AG04449 (cell line): ENCODE measurements at regions of chr6 and their contacts with region 1.

Region 1: DNA sequence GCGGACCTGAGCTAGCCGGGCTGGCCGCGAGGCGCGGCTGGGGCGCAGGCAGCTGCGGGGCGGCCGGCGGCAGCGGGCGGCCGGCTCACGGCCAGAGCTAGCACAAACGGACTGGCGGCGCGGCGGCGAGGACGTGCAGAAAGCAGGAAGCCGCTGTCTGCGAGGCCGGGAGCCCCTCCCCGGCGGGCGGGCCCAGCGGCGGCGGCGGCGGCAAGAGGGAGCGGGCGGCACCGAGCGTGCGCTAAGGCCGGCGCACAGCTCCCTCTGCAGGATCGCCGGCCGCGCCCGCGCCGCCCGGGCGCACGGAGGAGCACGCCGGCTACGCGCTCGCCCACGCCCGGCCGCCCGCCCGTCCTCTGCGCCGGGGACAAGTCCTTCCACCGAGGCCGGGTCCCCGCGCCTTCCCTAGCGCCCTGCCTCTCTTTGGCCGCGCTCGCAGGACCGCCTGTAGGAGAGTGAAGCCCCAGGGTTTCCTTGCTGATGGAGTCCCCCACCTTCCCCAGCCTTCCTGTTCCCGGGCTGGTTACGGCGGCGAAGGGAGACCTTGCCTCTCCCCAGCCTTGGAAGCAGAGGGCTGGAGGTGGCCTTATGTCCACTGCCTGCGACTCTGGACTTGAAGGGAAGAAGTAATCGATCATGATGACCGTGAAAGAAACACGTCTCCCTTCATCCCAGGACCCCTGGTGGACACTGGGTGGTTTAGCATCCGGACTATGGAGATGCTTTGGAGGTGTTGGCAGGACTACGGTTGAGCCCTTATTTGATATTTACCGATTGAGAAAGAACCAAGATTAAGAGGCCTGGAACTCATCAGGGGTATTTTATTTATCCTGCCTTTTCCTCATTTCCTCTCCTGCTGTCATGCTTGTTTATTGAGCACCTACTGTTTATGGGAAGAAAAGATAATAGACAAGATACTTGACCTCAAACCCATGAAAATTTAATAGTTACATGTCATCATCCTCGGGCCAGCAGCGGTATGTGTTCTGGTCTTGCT is at the start of gene PREP:
- DNase-seq: no peak
- H3K4me3 ChIP-seq: peak within 1 kb of the TSS; percentile 95
- CTCF ChIP-seq: peak; percentile 76

Region 2: GRCh38 chr6:105384008-105384407 is 19.2 kb before region 1 on chr6:
- CTCF ChIA-PET with region 1: interaction called, 18 read pairs
- POLR2A ChIA-PET with region 1: interaction called, 4 read pairs
- DNase-seq: no peak
- H3K4me3 ChIP-seq: no peak overlapping the region
- CTCF ChIP-seq: no peak

Region 3: DNA sequence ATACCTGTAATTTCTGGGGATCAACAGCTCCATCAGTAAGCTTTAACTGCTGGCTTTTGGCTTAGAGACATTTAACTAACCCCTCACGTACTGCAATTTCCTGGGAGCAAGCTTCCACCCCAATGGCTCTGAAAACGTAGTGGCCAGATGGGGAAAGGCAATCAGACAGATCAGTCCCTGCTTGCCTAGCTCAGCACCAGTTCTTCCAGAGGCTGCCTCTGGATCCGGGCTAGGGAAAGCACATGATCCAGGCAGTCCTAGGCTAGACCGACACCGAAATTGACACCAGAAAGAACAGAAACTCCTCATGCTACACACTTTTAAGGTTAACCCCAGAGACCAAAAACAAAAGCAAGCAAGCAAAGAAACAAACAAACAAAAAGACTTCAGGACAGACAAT is 13.7 kb before region 1 on chr6:
- CTCF ChIA-PET with region 1: interaction called, 21 read pairs
- POLR2A ChIA-PET with region 1: interaction called, 4 read pairs
- DNase-seq: no peak
- H3K4me3 ChIP-seq: no peak overlapping the region
- CTCF ChIP-seq: no peak